ENCODE measurements at regions of chr2 and their contacts with region 1.

Region 1: GRCh38 chr2:169933124-169933711 is 106.0 kb downstream of the UBR3 start:
- DNase-seq: peak; percentile 67
- H3K4me3 ChIP-seq: no peak overlapping the region
- H3K27ac ChIP-seq: no peak overlapping the region
- H3K4me1 ChIP-seq: no peaks in the 10 kb centered on the region
- H3K27me3 ChIP-seq: no peaks in the 10 kb centered on the region
- CTCF ChIP-seq: peak; percentile 78

Region 2: GRCh38 chr2:169528271-169528701 is 404.9 kb before region 1 on chr2:
- CTCF ChIA-PET with region 1: no interaction called
- POLR2A ChIA-PET with region 1: no interaction called
- intact Hi-C with region 1: loop called (anchors 5 kb)
- DNase-seq: peak; percentile 74
- H3K4me3 ChIP-seq: no peak overlapping the region
- H3K27ac ChIP-seq: no peak overlapping the region
- H3K4me1 ChIP-seq: no peaks in the 10 kb centered on the region
- H3K27me3 ChIP-seq: no peaks in the 10 kb centered on the region
- CTCF ChIP-seq: peak; percentile 89

Region 3: DNA sequence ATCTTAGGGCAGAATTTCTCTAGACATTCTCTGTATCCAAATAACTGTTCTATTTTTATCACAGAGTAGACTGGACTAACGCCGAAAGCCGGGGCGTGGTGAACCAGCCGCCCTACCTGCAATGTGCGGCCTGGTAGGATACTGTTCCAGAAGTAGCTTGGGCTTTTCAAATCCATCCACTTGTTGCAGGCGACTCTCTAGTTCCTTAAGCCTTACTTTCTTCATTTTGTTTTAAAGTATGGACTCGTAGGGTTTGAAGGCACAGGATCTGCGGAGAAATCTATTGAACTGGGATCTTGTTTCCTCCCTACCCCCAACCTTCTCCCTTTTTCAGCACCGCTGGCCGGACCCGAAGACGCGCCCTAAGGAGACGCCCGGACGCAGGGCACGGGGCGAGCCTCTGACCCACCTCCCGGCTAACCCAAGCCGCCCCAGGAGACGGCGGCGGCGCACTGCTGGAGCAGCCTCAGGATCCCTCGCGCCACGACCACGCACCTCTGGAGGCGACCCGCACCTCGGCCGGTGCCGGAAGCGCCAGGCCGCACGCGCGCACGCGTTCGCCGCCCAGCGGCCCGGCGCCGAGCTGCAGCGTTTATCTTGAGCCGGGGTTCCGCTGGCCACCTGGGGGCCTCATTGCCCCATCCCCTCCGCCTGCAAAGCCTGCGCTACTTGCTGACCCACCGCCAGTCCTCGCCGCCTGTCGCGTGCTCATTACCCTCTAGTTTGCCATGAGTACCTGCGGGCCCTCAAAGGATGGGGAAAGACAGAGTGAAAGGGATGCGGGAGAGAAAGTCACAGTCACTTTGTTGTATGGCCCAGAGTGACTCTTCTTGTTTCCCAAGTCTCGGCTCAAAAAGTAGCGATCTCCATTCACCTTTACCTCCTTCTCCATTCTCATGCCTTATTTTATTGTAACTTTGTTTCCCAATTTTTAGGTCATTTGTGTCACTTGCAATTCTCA is 108.6 kb before region 1 on chr2 and contains the start of gene METTL5:
- CTCF ChIA-PET with region 1: no interaction called
- POLR2A ChIA-PET with region 1: no interaction called
- intact Hi-C with region 1: loop called (anchors 2 kb)
- DNase-seq: peak; percentile 85
- H3K4me3 ChIP-seq: peak within 1 kb of the TSS; percentile 87
- H3K27ac ChIP-seq: peak within 1 kb of the TSS; percentile 79
- H3K4me1 ChIP-seq: peaks cover 17% of the 10 kb centered on the region
- H3K27me3 ChIP-seq: no peaks in the 10 kb centered on the region
- CTCF ChIP-seq: peak; percentile 85
- total RNA-seq, gene METTL5: 97.3 and 107 TPM in 2 replicates

Region 4: DNA sequence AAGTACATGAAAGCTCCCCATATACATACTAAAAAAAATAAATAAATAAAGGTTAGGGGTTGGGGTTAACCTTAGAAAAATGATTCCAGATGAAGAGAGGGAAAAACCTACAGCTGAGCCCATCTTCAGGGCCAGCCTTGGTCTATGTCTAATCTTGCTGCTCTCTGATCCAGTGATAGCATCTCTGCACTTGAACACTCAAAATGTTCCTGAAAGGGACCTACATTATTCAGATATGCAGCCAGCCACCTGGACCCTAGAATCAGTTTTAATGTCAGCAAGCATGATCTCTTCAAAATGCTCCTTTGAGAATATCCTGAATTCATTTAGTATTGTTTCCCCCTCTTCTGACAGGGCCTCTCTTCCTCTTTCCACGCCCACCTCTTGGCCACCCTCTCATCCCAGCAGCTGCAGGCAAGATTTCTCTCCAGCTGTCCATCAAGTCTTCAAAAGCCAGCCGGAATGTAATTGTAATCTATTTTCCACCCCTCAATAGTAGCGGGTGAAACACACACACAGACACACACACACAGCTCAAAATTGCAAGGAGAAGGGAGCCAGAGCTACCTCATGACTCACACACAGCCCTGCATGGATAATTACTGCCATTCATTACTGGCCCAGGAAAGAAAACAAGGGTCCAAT is 380.3 kb after region 1 on chr2:
- CTCF ChIA-PET with region 1: no interaction called
- POLR2A ChIA-PET with region 1: no interaction called
- intact Hi-C with region 1: no loop called
- DNase-seq: peak; percentile 81
- H3K4me3 ChIP-seq: no peak overlapping the region
- H3K27ac ChIP-seq: no peak overlapping the region
- H3K4me1 ChIP-seq: peaks cover 12% of the 10 kb centered on the region
- H3K27me3 ChIP-seq: no peaks in the 10 kb centered on the region
- CTCF ChIP-seq: no peak

Region 5: DNA sequence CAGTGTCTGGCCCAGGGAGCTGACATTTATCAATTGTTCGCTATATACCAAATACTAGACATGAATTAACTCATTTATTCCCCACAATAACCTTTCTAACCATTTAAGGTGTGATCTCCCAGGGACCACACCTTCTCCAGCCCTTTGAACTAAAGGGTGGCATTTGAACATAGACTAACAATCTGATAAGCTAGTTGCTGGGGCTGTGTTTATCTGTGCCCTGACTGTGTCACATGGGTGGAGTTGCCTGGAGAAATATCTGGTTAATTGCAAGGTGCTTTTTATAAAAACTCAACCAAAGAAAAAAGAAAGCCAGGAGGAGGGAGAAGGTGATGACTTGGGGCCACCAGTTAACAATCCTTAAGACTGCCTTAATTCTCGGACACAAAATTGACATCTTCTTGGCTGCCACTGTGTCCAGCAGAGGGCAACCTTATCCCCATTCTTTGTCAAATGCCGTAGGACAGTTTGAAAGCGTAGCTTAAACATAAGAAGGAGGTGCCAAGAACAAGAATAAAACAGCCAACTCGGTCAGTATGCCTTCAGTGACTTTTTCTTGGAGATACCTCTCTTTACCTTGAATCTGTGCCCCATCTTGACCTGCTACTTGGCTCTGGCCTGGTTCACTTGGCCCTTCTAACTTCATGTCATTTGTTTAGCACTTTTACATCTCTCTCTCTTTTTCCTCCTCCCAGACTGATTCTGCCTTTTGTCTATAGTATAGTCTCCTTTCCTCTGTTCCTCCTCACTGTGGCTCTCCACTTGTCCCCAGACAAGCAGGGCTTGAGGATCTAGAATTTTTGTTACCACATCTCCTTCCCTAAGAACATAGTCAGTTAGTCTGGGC is 428.1 kb after region 1 on chr2:
- CTCF ChIA-PET with region 1: no interaction called
- POLR2A ChIA-PET with region 1: no interaction called
- intact Hi-C with region 1: loop called (anchors 5 kb)
- DNase-seq: peak; percentile 69
- H3K4me3 ChIP-seq: no peak overlapping the region
- H3K27ac ChIP-seq: no peak overlapping the region
- H3K4me1 ChIP-seq: no peaks in the 10 kb centered on the region
- H3K27me3 ChIP-seq: peaks cover 23% of the 10 kb centered on the region
- CTCF ChIP-seq: peak; percentile 77

Measured in A673 (cell line).